Testis (tissue), 5 donors: ENCODE measurements at regions of chr20 and their contacts with region 1.

Region 1: GRCh38 chr20:34312544-34313217 is 9.5 kb upstream of the AHCY start:
- DNase-seq: peak; percentile 89
- H3K4me3 ChIP-seq: peak overlapping the region in 1 of 2 donors; percentile 51
- H3K27ac ChIP-seq: no peak overlapping the region
- H3K4me1 ChIP-seq: peaks cover 5% of the 10 kb centered on the region
- H3K27me3 ChIP-seq: no peaks in the 10 kb centered on the region
- CTCF ChIP-seq: peak; percentile 93 to 99 (median 98)
- POLR2A ChIP-seq: no peak

Region 2: GRCh38 chr20:34190679-34191090 is 122.0 kb before region 1 on chr20:
- intact Hi-C with region 1: loop called (anchors 10 kb)
- DNase-seq: peak; percentile 89
- H3K4me3 ChIP-seq: no peak overlapping the region
- H3K27ac ChIP-seq: no peak overlapping the region
- H3K4me1 ChIP-seq: no peaks in the 10 kb centered on the region
- H3K27me3 ChIP-seq: no peaks in the 10 kb centered on the region
- CTCF ChIP-seq: peak; percentile 45 to 66 (median 60)
- POLR2A ChIP-seq: no peak

Region 3: GRCh38 chr20:34473262-34473883 is 160.7 kb after region 1 on chr20:
- intact Hi-C with region 1: loop called (anchors 10 kb)
- DNase-seq: peak; percentile 78
- H3K4me3 ChIP-seq: no peak overlapping the region
- H3K27ac ChIP-seq: no peak overlapping the region
- H3K4me1 ChIP-seq: no peaks in the 10 kb centered on the region
- H3K27me3 ChIP-seq: no peaks in the 10 kb centered on the region
- CTCF ChIP-seq: peak in 1 of 3 experiments; percentile 5
- POLR2A ChIP-seq: no peak